ENCODE measurements at regions of chr17 and their contacts with region 1.

Region 1: GRCh38 chr17:73304971-73305812 is 6.6 kb downstream of the CDC42EP4 start:
- DNase-seq: peak; percentile 71 to 82
- ATAC-seq: peak; percentile 55 to 60
- H3K4me3 ChIP-seq: peak overlapping the region; percentile 33
- H3K27ac ChIP-seq: peak overlapping the region; percentile 95 to 96
- H3K4me1 ChIP-seq: peaks cover 82% of the 10 kb centered on the region
- CTCF ChIP-seq: peak; percentile 24; the same call in 2 of the 3 replicates
- EP300 ChIP-seq: no peak
- POLR2A ChIP-seq: peak; percentile 24; the same call in 1 of the 2 replicates
- RAD21 ChIP-seq: peak; percentile 39 to 46; a peak in 3 of 5 replicates

Region 2: GRCh38 chr17:73132085-73132492 is 173.1 kb before region 1 on chr17:
- CTCF ChIA-PET with region 1: no interaction called
- POLR2A ChIA-PET with region 1: no interaction called
- DNase-seq: no peak
- ATAC-seq: no peak
- H3K4me3 ChIP-seq: no peak overlapping the region
- H3K27ac ChIP-seq: no peak overlapping the region
- H3K4me1 ChIP-seq: peaks cover 3% of the 10 kb centered on the region; the same call in 2 of the 3 replicates
- CTCF ChIP-seq: no peak
- EP300 ChIP-seq: no peak
- POLR2A ChIP-seq: no peak
- RAD21 ChIP-seq: no peak

Region 3: DNA sequence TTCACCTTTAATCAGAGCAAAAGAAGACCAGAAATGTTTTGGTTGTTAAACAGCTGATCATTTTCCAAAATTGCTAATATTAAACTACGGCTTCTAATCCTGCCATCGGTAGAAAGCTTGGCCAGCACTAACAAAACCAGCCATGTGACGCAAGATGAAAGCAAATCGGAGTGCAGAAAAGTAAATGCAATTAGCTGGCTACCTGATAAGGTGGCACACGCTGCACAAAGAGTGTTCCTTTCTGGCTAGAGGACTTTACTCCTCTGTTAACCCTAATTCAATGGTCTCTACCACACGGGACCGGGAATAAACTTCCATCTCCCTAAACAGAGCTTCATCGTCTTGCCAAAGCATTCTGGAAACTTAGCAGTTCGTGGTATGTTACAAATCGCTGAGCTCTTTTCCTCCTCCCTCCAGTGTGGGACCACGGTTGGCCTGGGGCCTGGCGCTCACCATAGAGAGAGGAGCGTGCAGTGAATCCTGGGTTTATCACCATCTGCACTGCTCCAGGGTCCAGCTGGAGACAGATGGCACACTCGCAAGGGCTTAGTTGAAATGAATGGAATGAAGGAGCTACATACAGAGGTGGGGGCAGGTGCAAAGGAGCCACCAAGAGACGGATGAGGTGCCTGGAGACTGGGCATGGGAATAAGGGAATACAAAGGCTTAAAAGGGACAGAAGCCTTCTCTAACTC is 122.4 kb before region 1 on chr17:
- CTCF ChIA-PET with region 1: no interaction called
- POLR2A ChIA-PET with region 1: no interaction called
- DNase-seq: no peak
- ATAC-seq: no peak
- H3K4me3 ChIP-seq: no peak overlapping the region
- H3K27ac ChIP-seq: no peak overlapping the region
- H3K4me1 ChIP-seq: peaks cover 7% of the 10 kb centered on the region; the same call in 1 of the 3 replicates
- CTCF ChIP-seq: no peak
- EP300 ChIP-seq: no peak
- POLR2A ChIP-seq: no peak
- RAD21 ChIP-seq: no peak

Region 4: GRCh38 chr17:73316919-73317505 is 11.8 kb after region 1 on chr17:
- CTCF ChIA-PET with region 1: interaction called, 14 read pairs
- POLR2A ChIA-PET with region 1: no interaction called
- DNase-seq: no peak
- ATAC-seq: no peak
- H3K4me3 ChIP-seq: no peak overlapping the region
- H3K27ac ChIP-seq: 0 out of 6 replicates have a peak overlapping the region, but pooled peaks of 1 of the 2 experiments have one; percentile 18
- H3K4me1 ChIP-seq: peaks cover 10% of the 10 kb centered on the region
- CTCF ChIP-seq: no peak
- EP300 ChIP-seq: no peak
- POLR2A ChIP-seq: no peak
- RAD21 ChIP-seq: no peak

Region 5: GRCh38 chr17:73342050-73342522 is 36.9 kb after region 1 on chr17:
- CTCF ChIA-PET with region 1: interaction called, 128 read pairs
- POLR2A ChIA-PET with region 1: interaction called, 28 read pairs
- DNase-seq: peak; percentile 93
- ATAC-seq: peak; percentile 71 to 80
- H3K4me3 ChIP-seq: no peak overlapping the region
- H3K27ac ChIP-seq: peak overlapping the region; percentile 86 to 93
- H3K4me1 ChIP-seq: peaks cover 55% of the 10 kb centered on the region
- CTCF ChIP-seq: no peak
- EP300 ChIP-seq: peak in 1 of 2 experiments; percentile 54; a peak in 1 of 5 replicates
- POLR2A ChIP-seq: no peak
- RAD21 ChIP-seq: no peak

Region 6: GRCh38 chr17:73782641-73783381 is 477.6 kb after region 1 on chr17:
- CTCF ChIA-PET with region 1: no interaction called
- POLR2A ChIA-PET with region 1: no interaction called
- DNase-seq: no peak
- ATAC-seq: peak; percentile 22 to 40; a peak in 3 of 6 replicates
- H3K4me3 ChIP-seq: no peak overlapping the region
- H3K27ac ChIP-seq: peak overlapping the region in 1 of 2 experiments; percentile 55; a peak in 1 of 6 replicates
- H3K4me1 ChIP-seq: peaks cover 22% of the 10 kb centered on the region
- CTCF ChIP-seq: no peak
- EP300 ChIP-seq: no peak
- POLR2A ChIP-seq: no peak
- RAD21 ChIP-seq: no peak

Measured in A549 (cell line).